ENCODE measurements at regions of chr10 and their contacts with region 1.

Region 1: DNA sequence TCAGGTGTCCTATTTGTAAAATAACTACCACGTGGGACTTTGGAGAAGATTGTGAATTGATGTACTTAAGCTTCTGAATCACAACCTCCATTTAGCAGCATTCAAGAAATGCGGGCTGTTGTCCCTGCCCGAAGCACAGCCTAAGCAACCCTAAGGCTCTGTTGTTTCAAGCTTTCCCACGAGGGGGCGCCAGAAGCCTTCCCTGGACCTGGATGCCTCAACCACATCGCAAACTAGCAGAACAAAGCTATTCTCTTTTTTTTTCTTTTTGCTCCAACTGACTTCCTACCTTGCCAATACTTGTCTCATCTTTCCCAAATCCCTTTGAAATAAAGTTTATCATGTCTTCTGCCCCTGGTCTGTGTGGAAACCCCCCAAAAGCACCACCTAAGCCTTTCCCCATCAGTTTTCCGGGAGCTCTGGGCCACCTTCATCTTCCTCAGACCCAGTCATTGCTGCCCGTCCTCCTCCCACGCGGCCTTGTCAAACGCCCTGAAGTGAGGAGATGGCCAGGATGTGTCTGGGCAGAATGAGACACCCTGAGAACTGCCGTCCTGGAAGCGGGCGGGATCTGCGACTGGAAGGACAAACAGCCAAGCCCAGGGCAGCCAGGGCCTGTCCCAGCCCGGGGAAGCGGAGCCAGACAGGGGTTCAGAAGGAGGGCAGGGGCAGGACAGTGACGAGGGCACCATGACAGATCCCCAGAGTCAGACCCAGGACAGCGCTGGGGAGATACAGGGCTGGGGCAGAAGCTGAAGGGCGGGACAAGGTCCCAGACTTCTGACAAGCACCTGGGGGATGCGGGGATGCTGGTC is 112.7 kb downstream of the SLIT1 start:
- DNase-seq: peak; percentile 60 to 95 (median 82)
- ATAC-seq: peak; percentile 89 to 97 (median 94)
- H3K4me3 ChIP-seq: no peak overlapping the region
- H3K27ac ChIP-seq: no peak overlapping the region
- H3K4me1 ChIP-seq: no peaks in the 10 kb centered on the region
- H3K27me3 ChIP-seq: peaks cover 0 to 4% (median 0%) of the 10 kb centered on the region in 4 donors
- CTCF ChIP-seq: peak; percentile 81 to 89 (median 86)

Region 2: DNA sequence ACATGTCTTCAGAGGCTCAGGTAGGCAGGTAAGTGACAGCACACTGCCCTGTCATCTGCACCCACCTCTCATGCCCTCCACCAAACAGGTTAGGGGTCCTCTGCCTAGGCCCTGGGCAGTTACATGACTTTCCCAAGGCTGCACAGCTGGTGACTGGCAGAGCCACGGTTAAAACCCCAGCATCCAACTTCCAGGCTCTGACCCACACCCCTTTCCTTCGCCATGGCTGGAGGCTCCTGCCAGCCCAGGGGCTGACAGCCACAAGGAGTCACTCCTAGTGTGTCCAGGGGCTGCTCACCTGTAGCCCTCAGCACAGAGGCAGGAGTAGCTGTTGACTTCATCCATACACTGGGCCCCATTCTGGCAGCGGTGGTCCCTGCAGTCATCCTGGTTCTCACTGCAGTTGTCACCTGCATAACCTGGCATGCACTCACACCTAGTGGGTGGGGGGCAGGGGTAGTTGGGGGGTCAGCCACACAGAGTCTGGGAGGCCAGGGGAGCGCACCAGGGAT is 62.3 kb before region 1 on chr10:
- intact Hi-C with region 1: no loop called
- DNase-seq: no peak
- ATAC-seq: no peak
- H3K4me3 ChIP-seq: no peak overlapping the region
- H3K27ac ChIP-seq: no peak overlapping the region
- H3K4me1 ChIP-seq: no peaks in the 10 kb centered on the region
- H3K27me3 ChIP-seq: no peaks in the 10 kb centered on the region
- CTCF ChIP-seq: no peak

Region 3: DNA sequence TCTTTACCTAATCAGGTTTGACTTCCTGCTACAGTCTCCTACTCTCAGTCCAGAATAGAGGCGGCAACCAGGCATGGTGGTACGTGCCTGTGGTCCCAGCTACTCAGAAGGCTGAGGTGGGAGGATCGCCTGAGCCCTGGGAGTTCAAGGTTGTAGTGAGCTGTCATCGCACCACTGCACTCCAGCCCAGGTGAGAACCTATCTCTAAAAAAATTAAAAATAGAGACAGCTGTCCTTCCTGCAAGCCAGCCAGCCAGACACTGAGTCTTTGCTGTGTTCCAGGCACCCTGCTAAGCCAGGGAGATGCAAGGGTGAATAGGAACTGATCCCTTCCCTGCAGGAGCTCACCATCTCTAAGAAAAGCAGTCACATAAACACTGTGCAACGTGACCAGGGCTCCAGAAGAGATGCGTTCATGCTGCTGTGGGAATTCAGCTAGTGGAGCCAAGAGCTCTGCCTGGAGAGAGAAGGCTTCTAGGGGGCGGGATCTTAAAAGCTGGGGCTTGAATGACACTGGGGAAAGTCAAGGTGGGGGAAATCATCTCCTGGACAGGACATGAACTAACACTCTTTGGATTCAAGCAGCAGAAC is 134.8 kb after region 1 on chr10:
- intact Hi-C with region 1: loop called in 1 of 3 experiments (anchors 2 kb)
- DNase-seq: no peak
- ATAC-seq: no peak
- H3K4me3 ChIP-seq: no peak overlapping the region
- H3K27ac ChIP-seq: no peak overlapping the region
- H3K4me1 ChIP-seq: no peaks in the 10 kb centered on the region
- H3K27me3 ChIP-seq: no peaks in the 10 kb centered on the region
- CTCF ChIP-seq: no peak

Region 4: GRCh38 chr10:97217299-97217698 is 144.2 kb after region 1 on chr10:
- intact Hi-C with region 1: loop called in 1 of 3 experiments (anchors 5 kb)
- DNase-seq: no peak
- ATAC-seq: no peak
- H3K4me3 ChIP-seq: no peak overlapping the region
- H3K27ac ChIP-seq: no peak overlapping the region
- H3K4me1 ChIP-seq: no peaks in the 10 kb centered on the region
- H3K27me3 ChIP-seq: no peaks in the 10 kb centered on the region
- CTCF ChIP-seq: no peak

Region 5: DNA sequence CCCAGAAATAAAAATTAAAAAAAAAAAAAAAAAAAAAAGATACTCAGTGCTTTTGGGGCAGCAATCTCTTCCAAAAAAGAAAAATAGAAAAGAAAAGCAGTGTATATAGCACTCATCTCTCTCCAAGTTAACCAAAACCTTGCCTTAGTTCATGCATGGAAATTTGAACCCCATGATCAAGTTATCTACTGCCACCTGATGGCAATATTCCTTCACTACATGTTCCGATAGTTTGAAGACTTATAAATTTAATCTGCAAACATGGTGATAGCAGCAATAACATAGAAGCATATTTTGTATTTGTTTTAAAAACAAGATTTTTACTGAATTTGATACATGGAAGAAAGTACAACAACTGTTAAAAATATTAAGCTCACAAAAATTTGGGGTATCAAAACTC is 161.3 kb after region 1 on chr10:
- intact Hi-C with region 1: loop called in 1 of 3 experiments (anchors 10 kb)
- DNase-seq: no peak
- ATAC-seq: peak in 3 of 4 donors; percentile 67 to 77 (median 70)
- H3K4me3 ChIP-seq: no peak overlapping the region
- H3K27ac ChIP-seq: no peak overlapping the region
- H3K4me1 ChIP-seq: peaks cover 0 to 6% (median 6%) of the 10 kb centered on the region in 3 donors
- H3K27me3 ChIP-seq: no peaks in the 10 kb centered on the region
- CTCF ChIP-seq: peak; percentile 27 to 49 (median 31)

Region 6: GRCh38 chr10:97365761-97366351 is 292.8 kb after region 1 on chr10:
- intact Hi-C with region 1: loop called in 1 of 3 experiments (anchors 10 kb)
- DNase-seq: no peak
- ATAC-seq: peak in 2 of 4 donors; percentile 62 to 69
- H3K4me3 ChIP-seq: no peak overlapping the region
- H3K27ac ChIP-seq: peak overlapping the region in 2 of 4 donors; percentile 44 to 63
- H3K4me1 ChIP-seq: no peaks in the 10 kb centered on the region
- H3K27me3 ChIP-seq: no peaks in the 10 kb centered on the region
- CTCF ChIP-seq: no peak